Posterior vena cava (tissue), 2 donors: ENCODE measurements at regions of chr3 and their contacts with region 1.

Region 1: GRCh38 chr3:123459881-123460280 is 11.0 kb upstream of the ADCY5 start:
- DNase-seq: no peak

Region 2: GRCh38 chr3:123390865-123391600 is 68.8 kb before region 1 on chr3:
- intact Hi-C with region 1: no loop called
- DNase-seq: no peak

Region 3: DNA sequence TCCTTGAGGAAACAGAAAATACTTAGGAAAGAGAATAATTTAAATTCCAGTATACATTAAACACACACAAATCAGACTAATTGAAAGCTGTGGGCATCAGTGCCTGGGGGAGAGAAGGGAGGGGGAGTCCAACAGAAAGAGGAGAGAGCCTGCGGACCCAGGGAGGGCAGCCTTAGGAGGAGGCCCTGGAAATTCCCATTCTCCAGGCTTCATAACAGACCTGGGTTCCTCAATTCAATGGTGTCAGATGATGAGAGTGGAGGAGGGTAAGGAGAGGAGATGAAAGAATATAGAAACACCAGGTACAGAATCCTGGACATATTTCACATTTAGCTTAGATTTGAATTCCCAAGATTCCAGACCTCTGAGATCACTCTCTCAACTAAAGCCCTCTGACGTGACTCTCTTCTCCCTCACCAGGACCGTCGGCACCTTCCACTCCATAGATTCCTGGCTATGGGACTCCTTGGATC is 949.9 kb after region 1 on chr3:
- intact Hi-C with region 1: loop called in 1 of 2 experiments (anchors 5 kb)
- DNase-seq: no peak